Activated CD8-positive, alpha-beta memory T cell treated with anti-CD3 and anti-CD28 coated beads, Interleukin-2, amount 10 ng/mL, durations not matched to agents 7 days and 5 days (primary cell): ENCODE measurements at regions of chr12 and their contacts with region 1.

Region 1: DNA sequence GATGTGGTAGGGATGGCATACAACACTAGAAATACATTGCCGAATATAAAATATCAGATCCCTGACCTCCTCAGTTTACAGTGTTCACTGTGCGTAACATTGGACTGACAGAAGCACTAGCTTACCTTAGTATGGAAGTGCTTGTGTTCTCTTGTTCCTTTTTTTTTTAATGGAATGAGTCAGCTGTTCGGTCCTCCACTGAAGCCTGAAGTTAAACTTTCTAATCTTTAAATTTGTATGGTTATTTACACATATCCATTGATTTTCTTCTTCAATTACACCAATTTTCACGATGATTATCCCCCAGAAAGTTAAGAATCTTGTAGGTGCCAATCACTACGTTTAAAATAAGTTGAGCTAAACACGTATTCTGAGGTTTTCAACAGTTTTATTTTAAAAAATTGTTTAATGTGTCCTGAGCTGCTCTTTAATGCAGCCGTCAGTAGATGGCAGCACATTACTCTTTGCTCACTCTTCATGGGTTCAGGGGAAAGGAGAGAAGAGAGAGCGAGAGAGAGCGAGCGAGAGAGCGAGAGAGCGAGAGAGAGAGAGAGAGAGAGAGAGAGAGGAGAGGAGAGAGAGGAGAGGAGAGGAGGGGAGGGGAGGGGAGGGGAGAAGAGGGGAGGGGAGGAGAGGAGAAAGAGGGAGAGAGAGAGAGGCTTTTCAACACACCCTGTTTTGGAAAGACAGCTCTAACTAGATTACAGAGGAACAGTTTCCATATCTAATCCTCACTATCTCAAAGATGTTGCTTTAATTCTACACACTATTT is 134.7 kb upstream of the SCAF11 start:
- DNase-seq: peak; percentile 71
- ATAC-seq: peak; percentile 95
- H3K4me3 Mint-ChIP-seq: peak overlapping the region; percentile 52
- H3K27ac Mint-ChIP-seq: peak overlapping the region; percentile 75
- H3K4me1 Mint-ChIP-seq: peaks cover 5% of the 10 kb centered on the region
- H3K27me3 Mint-ChIP-seq: peaks cover 31% of the 10 kb centered on the region

Region 2: DNA sequence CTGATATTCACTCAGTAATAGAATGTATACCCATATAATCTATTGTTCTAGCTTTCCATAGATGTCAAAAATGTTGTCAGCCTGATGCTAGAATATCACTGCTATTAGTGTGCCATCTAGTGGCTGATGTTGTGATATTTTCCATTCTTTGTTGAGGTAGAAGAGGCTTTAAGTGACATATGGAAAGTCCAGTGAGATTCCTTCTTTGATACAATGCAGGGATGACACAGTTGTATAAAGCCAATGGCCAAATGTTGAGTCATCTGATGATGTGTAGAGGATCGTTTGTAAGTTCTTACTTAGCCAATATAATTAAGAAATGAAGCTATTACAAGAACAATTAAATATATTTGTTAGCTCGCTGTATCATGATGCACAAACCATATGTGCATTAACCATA is 896.3 kb after region 1 on chr12:
- CTCF ChIA-PET with region 1: interaction called, 19 read pairs
- DNase-seq: no peak
- ATAC-seq: peak; percentile 68
- H3K4me3 Mint-ChIP-seq: no peak overlapping the region
- H3K27ac Mint-ChIP-seq: no peak overlapping the region
- H3K4me1 Mint-ChIP-seq: peaks cover 9% of the 10 kb centered on the region
- H3K27me3 Mint-ChIP-seq: peaks cover 31% of the 10 kb centered on the region